ENCODE measurements at regions of chr2 and their contacts with region 1.

Region 1: GRCh38 chr2:38315707-38316333 is 61.3 kb downstream of the ATL2 start:
- DNase-seq: peak in 4 of 14 experiments; percentile 38 to 65 (median 56)
- ATAC-seq: peak; percentile 68
- H3K4me3 ChIP-seq: no peak overlapping the region
- H3K4me3 Mint-ChIP-seq: no peak overlapping the region
- H3K27ac ChIP-seq: no peak overlapping the region
- H3K27ac Mint-ChIP-seq: no peak overlapping the region
- H3K4me1 ChIP-seq: no peaks in the 10 kb centered on the region
- H3K4me1 Mint-ChIP-seq: no peaks in the 10 kb centered on the region
- H3K27me3 ChIP-seq: no peaks in the 10 kb centered on the region
- H3K27me3 Mint-ChIP-seq: no peaks in the 10 kb centered on the region
- CTCF ChIP-seq: peak; percentile 69

Region 2: DNA sequence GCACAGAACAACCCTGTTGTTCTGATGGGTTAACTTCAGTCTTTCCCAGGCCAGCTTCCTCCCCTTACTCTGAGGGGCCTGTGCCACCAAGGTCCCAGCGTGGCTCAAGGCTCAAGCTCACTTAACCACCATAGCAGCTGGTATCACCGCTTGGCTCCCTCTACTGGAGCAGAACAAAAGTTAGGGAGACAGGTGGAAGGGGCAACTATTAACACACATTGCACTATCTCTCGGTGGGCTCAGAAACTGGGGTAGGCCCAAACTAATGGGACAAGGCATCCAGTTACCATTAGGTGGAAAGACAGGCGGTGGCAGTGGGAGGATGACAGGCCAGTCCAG is 149.9 kb after region 1 on chr2:
- CTCF ChIA-PET with region 1: interaction called, 11 read pairs
- POLR2A ChIA-PET with region 1: interaction called, 4 read pairs
- intact Hi-C with region 1: loop called (anchors 1 to 2 kb)
- DNase-seq: peak in 9 of 14 experiments; percentile 2 to 50 (median 14)
- ATAC-seq: peak; percentile 54
- H3K4me3 ChIP-seq: no peak overlapping the region
- H3K4me3 Mint-ChIP-seq: no peak overlapping the region
- H3K27ac ChIP-seq: no peak overlapping the region
- H3K27ac Mint-ChIP-seq: no peak overlapping the region
- H3K4me1 ChIP-seq: no peaks in the 10 kb centered on the region
- H3K4me1 Mint-ChIP-seq: no peaks in the 10 kb centered on the region
- H3K27me3 ChIP-seq: no peaks in the 10 kb centered on the region
- H3K27me3 Mint-ChIP-seq: no peaks in the 10 kb centered on the region
- CTCF ChIP-seq: peak; percentile 31

Region 3: GRCh38 chr2:38508311-38509039 is 192.7 kb after region 1 on chr2:
- CTCF ChIA-PET with region 1: interaction called, 91 read pairs
- POLR2A ChIA-PET with region 1: interaction called, 10 read pairs
- intact Hi-C with region 1: loop called (anchors 1 kb)
- DNase-seq: peak; percentile 67 to 87 (median 76)
- ATAC-seq: peak; percentile 81
- H3K4me3 ChIP-seq: no peak overlapping the region
- H3K4me3 Mint-ChIP-seq: no peak overlapping the region
- H3K27ac ChIP-seq: no peak overlapping the region
- H3K27ac Mint-ChIP-seq: no peak overlapping the region
- H3K4me1 ChIP-seq: peaks cover 7% of the 10 kb centered on the region
- H3K4me1 Mint-ChIP-seq: peaks cover 6% of the 10 kb centered on the region
- H3K27me3 ChIP-seq: no peaks in the 10 kb centered on the region
- H3K27me3 Mint-ChIP-seq: peaks cover 6% of the 10 kb centered on the region
- CTCF ChIP-seq: peak; percentile 76

Region 4: GRCh38 chr2:38734299-38735058 is 418.7 kb after region 1 on chr2:
- CTCF ChIA-PET with region 1: no interaction called
- POLR2A ChIA-PET with region 1: no interaction called
- intact Hi-C with region 1: loop called in 1 of 2 experiments (anchors 10 kb)
- DNase-seq: peak in 1 of 14 experiments; percentile 9
- ATAC-seq: no peak
- H3K4me3 ChIP-seq: no peak overlapping the region
- H3K4me3 Mint-ChIP-seq: no peak overlapping the region
- H3K27ac ChIP-seq: no peak overlapping the region
- H3K27ac Mint-ChIP-seq: no peak overlapping the region
- H3K4me1 ChIP-seq: no peaks in the 10 kb centered on the region
- H3K4me1 Mint-ChIP-seq: peaks cover 20% of the 10 kb centered on the region
- H3K27me3 ChIP-seq: no peaks in the 10 kb centered on the region
- H3K27me3 Mint-ChIP-seq: no peaks in the 10 kb centered on the region
- CTCF ChIP-seq: no peak

Region 5: GRCh38 chr2:38740851-38741731 is 425.3 kb after region 1 on chr2:
- CTCF ChIA-PET with region 1: no interaction called
- POLR2A ChIA-PET with region 1: no interaction called
- intact Hi-C with region 1: loop called (anchors 1 to 10 kb)
- DNase-seq: peak in 6 of 14 experiments; percentile 25 to 76 (median 51)
- ATAC-seq: peak; percentile 33
- H3K4me3 ChIP-seq: no peak overlapping the region
- H3K4me3 Mint-ChIP-seq: peak overlapping the region; percentile 1
- H3K27ac ChIP-seq: no peak overlapping the region
- H3K27ac Mint-ChIP-seq: peak overlapping the region; percentile 43
- H3K4me1 ChIP-seq: peaks cover 17% of the 10 kb centered on the region
- H3K4me1 Mint-ChIP-seq: peaks cover 54% of the 10 kb centered on the region
- H3K27me3 ChIP-seq: no peaks in the 10 kb centered on the region
- H3K27me3 Mint-ChIP-seq: no peaks in the 10 kb centered on the region
- CTCF ChIP-seq: peak; percentile 78